ENCODE measurements at regions of chr3 and their contacts with region 1.

Region 1: DNA sequence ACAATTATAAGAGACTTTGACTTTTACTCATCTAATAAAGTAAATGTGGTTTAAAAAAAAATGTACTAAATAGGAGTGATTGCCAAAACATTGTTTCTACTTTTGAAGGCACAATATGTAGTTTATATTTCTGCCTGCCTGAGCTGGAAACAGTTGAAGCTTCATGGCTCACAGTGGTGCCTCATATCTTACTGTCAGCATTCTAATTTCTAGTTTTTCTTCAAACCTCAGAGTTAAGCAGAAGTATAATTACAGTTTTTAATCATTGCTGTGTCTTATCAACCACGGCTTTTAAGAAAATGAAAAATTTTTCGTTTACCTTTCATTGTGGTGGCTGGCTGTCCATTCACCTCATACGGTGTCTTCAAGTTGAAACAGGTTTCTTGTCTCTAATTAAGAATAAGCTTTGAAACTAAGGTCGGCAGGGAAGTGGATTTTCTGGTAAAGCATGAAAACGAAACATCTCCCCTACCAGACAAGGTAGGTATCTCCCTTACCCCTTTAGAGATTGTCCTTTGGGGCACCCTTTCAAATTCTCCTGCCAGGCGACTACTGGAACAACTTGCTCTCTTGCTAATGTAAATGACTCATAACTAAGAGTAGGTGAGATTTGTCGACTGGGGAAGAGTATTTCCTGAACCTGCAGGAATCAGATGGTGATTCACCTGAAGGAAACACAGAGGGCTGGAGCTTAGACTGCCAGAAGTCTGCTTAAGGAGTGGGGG is at the start of gene GPR87:
- DNase-seq: peak; percentile 90
- H3K4me3 Mint-ChIP-seq: peak within 1 kb of the TSS; percentile 80
- H3K27ac Mint-ChIP-seq: peak within 1 kb of the TSS; percentile 94
- H3K4me1 Mint-ChIP-seq: peaks cover 28% of the 10 kb centered on the region
- H3K27me3 Mint-ChIP-seq: no peaks in the 10 kb centered on the region
- CTCF ChIP-seq: no peak
- total RNA-seq, gene GPR87: 41.9 and 51.8 TPM in 2 replicates

Region 2: DNA sequence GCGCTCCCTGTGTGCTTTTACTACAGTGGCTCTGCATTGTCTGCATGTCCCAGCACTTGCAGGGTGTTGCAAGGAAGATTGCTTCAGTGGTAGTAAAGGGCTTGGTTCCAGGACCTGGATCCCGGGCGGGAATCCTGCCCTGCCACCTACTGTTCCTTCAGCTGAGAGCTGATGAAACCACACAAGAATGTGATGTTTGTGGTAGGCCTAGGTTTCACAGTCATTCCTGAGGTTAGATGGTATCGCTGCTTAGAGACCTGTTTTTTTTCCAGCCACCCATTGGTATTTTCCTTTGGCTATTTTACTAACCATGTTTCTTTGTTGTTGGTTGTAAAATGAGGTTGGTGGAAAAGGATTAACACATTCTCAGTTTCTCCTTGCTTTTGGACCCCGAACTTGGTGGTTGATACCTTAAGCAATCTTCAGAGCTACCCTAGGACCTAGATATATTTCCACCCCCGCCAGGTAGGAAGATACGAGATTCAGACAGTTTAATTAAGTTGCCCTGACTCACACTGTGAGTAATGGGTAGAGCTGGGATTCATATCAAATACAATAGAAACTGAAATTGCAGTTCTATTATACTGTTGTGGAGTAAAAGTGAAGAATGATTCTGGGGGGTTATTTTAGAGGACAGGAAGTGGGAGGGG is 11.2 kb before region 1 on chr3:
- CTCF ChIA-PET with region 1: interaction called, 29 read pairs
- POLR2A ChIA-PET with region 1: interaction called, 341 read pairs
- intact Hi-C with region 1: loop called (anchors 1 kb)
- DNase-seq: peak; percentile 98
- H3K4me3 Mint-ChIP-seq: peak overlapping the region; percentile 60
- H3K27ac Mint-ChIP-seq: peak overlapping the region; percentile 79
- H3K4me1 Mint-ChIP-seq: peaks cover 89% of the 10 kb centered on the region
- H3K27me3 Mint-ChIP-seq: no peaks in the 10 kb centered on the region
- CTCF ChIP-seq: no peak

Measured in MCF 10A (cell line).